Esophagus muscularis mucosa (tissue), 4 donors: ENCODE measurements at regions of chr10 and their contacts with region 1.

Region 1: DNA sequence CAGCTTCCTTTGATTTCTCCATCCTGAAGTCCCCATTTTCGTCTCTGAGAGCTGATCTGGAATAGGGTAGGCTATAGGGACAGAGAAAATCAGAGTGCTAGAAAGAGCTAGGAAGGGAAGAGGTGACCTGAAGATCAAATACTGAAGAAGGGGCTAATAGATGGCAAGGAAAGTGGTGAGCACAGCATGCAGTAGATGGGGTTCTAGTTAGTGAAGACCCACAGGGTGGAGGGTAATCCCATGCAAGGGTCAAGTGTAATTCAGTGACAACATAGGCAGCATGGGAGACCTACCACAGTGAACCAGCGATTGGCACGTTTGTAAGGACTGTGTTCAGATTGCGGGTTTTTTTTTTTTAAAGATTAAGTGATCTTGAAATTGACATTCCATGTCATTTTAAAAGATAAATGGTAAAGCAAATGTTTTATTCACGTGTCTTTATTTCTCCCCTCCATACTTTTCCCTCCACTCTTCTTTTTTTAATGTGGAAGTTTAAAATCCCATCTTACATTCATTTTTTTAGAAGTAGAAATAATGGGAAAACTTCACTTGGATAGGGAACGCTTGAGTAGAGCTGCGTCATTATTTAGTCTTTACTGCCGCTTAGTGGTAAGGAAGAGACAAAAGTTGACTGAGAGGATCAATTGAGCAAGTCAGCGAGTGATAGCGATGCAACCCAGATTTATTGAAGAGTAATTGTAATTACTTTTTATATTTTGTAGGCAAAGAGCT is 21.0 kb upstream of the ABI1 start:
- DNase-seq: peak; percentile 34
- H3K4me3 ChIP-seq: no peak overlapping the region
- H3K27ac ChIP-seq: no peak overlapping the region
- H3K4me1 ChIP-seq: peaks cover 0 to 6% (median 2%) of the 10 kb centered on the region in 4 donors
- H3K27me3 ChIP-seq: peaks cover 0 to 25% (median 0%) of the 10 kb centered on the region in 4 donors
- CTCF ChIP-seq: peak; percentile 54 to 76 (median 62)
- EP300 ChIP-seq: no peak
- POLR2A ChIP-seq: no peak

Region 2: DNA sequence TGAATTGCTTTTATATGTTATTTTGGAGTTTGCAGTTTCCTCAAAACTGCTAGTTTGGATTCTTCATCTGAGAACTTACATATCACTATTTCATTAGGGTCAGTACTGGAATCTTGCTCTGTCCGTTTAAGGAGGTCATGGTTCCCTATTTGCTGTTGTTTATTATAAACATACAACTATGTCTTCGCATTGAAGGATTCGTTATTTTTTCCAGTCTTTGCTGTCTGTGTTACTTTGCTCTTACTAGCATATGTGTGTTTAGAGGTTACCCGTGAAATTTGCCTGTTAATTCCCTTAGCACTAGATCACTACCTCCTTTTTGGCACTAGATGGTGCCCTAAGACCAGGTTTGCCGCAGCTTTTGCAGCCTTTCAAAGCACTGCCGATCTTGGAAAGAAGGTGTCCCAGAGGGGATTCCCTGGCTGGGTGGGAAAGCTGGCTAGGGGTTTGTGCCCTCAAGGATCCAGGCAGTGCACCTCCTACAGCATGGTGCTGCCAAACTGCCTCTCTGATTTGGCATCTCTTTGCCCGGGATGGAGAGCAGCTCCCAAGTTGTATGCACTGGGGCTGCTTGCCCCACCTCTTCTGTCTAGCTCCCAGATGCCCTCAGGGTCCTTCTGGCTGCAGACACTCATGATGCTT is 546.7 kb before region 1 on chr10:
- intact Hi-C with region 1: loop called (anchors 10 kb)
- DNase-seq: no peak
- H3K4me3 ChIP-seq: peak overlapping the region in 3 of 4 donors; percentile 5 to 41 (median 14)
- H3K27ac ChIP-seq: no peak overlapping the region
- H3K4me1 ChIP-seq: peaks cover 0 to 3% (median 0%) of the 10 kb centered on the region in 4 donors
- H3K27me3 ChIP-seq: peaks cover 0 to 7% (median 0%) of the 10 kb centered on the region in 4 donors
- CTCF ChIP-seq: peak; percentile 38 to 55 (median 54)
- EP300 ChIP-seq: no peak
- POLR2A ChIP-seq: no peak

Region 3: GRCh38 chr10:26725837-26726727 is 155.7 kb before region 1 on chr10:
- intact Hi-C with region 1: loop called (anchors 2 kb)
- DNase-seq: no peak
- H3K4me3 ChIP-seq: no peak overlapping the region
- H3K27ac ChIP-seq: no peak overlapping the region
- H3K4me1 ChIP-seq: no peaks in the 10 kb centered on the region
- H3K27me3 ChIP-seq: no peaks in the 10 kb centered on the region
- CTCF ChIP-seq: peak; percentile 69 to 75 (median 71)
- EP300 ChIP-seq: no peak
- POLR2A ChIP-seq: no peak

Region 4: DNA sequence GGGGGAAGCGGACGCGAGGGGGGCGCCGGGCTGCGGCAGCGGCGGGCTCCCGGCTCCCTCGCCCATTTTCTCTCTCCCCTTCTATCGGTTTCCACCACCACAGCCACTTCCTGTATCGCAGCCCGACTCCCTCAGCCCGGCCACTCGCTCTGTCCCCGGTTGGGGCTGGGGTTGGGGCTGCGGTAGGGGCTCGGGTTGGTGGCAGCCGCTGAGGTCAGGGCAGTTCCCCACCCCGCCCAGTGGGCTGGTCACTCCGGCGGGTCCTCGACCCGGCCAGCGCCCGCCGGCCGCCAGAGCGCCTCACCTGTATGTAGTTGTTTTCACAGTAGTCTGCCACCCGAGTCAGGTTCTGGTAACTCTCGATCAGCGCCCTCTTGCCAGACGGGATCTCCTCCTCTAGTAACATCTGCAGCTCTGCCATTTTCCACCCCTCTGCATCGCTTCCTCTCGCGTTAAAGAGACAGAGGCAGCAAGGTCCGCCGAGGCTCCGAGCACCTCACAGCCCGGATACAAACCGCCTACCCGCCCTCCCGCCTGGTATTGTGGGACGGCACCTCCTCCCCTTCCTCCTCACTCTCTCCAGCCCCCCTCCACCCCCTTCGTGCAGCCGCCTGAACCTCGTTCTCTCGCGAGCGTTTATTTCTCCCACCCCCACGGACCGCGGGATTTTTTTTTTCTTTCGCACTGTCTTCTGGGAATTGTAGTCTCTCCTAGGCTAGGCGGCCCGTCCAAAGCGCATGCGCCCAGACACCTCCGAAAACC is 21.1 kb before region 1 on chr10 and contains the start of gene ABI1:
- intact Hi-C with region 1: loop called (anchors 2 kb)
- DNase-seq: peak; percentile 99
- H3K4me3 ChIP-seq: peak within 1 kb of the TSS; percentile 73 to 100 (median 84)
- H3K27ac ChIP-seq: peak within 1 kb of the TSS; percentile 94 to 98 (median 96)
- H3K4me1 ChIP-seq: peaks cover 28 to 44% (median 40%) of the 10 kb centered on the region in 4 donors
- H3K27me3 ChIP-seq: peaks cover 0 to 8% (median 0%) of the 10 kb centered on the region in 4 donors
- CTCF ChIP-seq: no peak
- EP300 ChIP-seq: no peak
- POLR2A ChIP-seq: peak; percentile 89
- total RNA-seq, gene ABI1: 37.4 to 57.7 (median 43.5) TPM